ENCODE measurements at regions of chr18 and their contacts with region 1.

Region 1: DNA sequence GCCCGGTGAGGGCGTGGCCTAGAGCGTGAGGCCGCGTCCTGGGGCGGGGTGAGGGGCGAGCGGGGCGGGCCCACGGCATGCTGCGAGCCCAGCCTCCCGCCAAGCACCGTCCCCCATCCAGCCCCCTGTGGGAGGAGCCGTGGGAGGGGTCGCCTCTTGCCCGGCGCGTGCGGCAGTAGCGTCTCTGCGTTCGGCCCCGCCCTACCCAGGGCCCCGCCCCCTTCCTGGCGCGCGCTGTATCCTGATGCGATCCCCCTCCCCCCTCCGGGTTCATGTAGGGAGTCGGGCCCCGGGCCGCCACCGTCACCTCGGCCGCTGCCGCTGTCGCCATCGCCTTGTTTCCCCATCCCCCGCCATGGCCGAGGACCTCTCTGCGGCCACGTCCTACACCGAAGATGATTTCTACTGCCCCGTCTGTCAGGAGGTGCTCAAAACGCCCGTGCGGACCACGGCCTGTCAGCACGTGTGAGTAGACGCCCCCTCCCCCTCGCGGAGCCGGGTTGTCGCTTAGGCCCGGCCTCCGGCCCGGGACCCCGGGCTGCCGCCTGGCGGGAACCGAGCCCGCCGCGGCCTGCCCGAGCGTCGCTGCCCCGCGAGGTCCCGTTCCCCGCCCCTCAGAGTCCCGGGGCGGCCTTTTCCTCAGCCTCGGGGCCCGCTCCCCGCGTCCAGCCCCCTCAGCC is 888 bp downstream of the RNF138 start:
- DNase-seq: peak; percentile 99 to 100 (median 99)
- H3K4me3 ChIP-seq: peak overlapping the region; percentile 52 to 93 (median 76)
- H3K27ac ChIP-seq: peak overlapping the region; percentile 95 to 100 (median 99)
- H3K4me1 ChIP-seq: peaks cover 23 to 27% of the 10 kb centered on the region in 2 donors
- H3K27me3 ChIP-seq: no peaks in the 10 kb centered on the region
- CTCF ChIP-seq: peak in 1 of 6 experiments; percentile 10
- POLR2A ChIP-seq: peak; percentile 62 to 77

Region 2: GRCh38 chr18:31929273-31929672 is 163.3 kb before region 1 on chr18:
- intact Hi-C with region 1: loop called in 1 of 2 experiments (anchors 5 kb)
- DNase-seq: peak in 1 of 7 donors; percentile 23
- H3K4me3 ChIP-seq: no peak overlapping the region
- H3K27ac ChIP-seq: no peak overlapping the region
- H3K4me1 ChIP-seq: peaks cover 7 to 15% of the 10 kb centered on the region in 2 donors
- H3K27me3 ChIP-seq: no peaks in the 10 kb centered on the region
- CTCF ChIP-seq: no peak
- POLR2A ChIP-seq: no peak

Region 3: DNA sequence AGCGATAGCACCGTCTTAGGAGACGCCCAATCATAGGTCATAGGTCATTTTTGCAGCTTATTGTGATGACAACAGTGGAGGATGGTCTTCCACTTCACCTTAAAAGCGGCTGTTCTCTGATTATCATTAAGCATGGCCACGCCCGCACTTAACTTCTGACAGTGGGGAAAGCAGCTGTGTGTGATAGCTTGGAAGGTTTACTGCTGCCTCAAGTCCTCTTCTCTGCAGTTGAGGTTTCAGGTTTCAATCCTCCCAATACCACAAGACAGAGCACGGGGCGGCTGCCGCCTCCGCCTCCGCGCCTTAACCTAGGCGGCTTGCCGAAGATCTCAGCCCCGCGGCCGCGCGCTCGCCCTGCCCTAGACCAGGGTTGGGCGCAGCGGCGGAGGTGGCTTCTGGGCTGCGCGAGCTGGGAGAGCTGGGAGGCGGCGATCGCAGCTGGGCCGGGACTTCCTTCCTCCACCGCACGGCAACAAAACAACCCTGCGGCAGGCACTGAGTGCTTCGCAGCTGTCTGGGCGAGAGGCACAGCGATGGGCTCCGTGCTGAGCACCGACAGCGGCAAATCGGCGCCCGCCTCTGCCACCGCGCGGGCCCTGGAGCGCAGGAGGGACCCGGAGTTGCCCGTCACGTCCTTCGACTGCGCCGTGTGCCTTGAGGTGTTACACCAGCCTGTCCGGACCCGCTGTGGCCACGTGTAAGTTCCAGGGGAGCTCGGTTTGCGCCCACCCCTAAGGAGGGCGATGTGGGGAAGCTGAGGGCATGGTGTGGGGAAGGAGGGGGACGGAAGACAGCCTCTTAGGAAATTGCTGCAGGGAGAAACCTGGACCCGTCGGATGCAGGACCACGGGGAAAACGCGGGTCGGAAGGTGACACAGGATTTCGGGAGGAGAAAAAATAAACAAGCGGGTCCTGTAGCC is 74.0 kb before region 1 on chr18 and contains the start of gene RNF125:
- intact Hi-C with region 1: loop called in 1 of 2 experiments (anchors 5 kb)
- DNase-seq: peak; percentile 69 to 85 (median 78)
- H3K4me3 ChIP-seq: peak within 1 kb of the TSS in 3 of 4 donors; percentile 45 to 73 (median 52)
- H3K27ac ChIP-seq: peak within 1 kb of the TSS in 4 of 5 donors; percentile 36 to 80 (median 66)
- H3K4me1 ChIP-seq: peaks cover 0 to 6% of the 10 kb centered on the region in 2 donors
- H3K27me3 ChIP-seq: no peaks in the 10 kb centered on the region
- CTCF ChIP-seq: peak in 3 of 6 experiments; percentile 2 to 23 (median 17)
- POLR2A ChIP-seq: peak; percentile 22 to 77
- total RNA-seq, gene RNF125: 0.44 to 7.9 (median 2.3) TPM

Region 4: DNA sequence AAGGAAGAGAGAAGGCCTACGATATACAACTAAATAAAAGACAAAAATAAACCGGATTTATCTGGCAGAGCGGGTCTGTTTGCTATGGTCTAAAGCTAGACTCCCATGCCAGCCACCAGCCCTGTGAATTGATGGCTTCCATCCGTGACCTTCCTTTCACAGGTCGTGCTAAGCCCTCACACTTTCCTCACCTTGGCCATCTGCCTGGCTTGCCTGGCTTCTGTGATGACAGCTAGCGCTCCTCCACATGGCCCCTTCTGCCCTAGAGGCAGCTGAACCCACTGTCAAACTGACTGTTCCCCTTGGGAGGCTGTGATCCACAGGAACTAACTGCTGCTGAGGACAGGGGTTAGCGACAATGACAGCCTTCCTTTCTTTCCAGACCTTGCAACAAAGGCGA is 345.6 kb after region 1 on chr18:
- intact Hi-C with region 1: no loop called
- DNase-seq: peak in 6 of 7 donors; percentile 20 to 62 (median 38)
- H3K4me3 ChIP-seq: no peak overlapping the region
- H3K27ac ChIP-seq: no peak overlapping the region
- H3K4me1 ChIP-seq: peaks cover 0 to 49% of the 10 kb centered on the region in 2 donors
- H3K27me3 ChIP-seq: no peaks in the 10 kb centered on the region
- CTCF ChIP-seq: no peak
- POLR2A ChIP-seq: no peak